Mammary epithelial cell (primary cell): ENCODE measurements at regions of chrX and their contacts with region 1.

Region 1: GRCh38 chrX:103640401-103641155 is 11.8 kb downstream of the TCEAL1 start:
- DNase-seq: peak; percentile 33
- H3K4me3 ChIP-seq: no peak overlapping the region
- H3K27ac ChIP-seq: no peak overlapping the region
- H3K4me1 ChIP-seq: peaks cover 26% of the 10 kb centered on the region
- H3K27me3 ChIP-seq: no peaks in the 10 kb centered on the region
- CTCF ChIP-seq: no peak

Region 2: DNA sequence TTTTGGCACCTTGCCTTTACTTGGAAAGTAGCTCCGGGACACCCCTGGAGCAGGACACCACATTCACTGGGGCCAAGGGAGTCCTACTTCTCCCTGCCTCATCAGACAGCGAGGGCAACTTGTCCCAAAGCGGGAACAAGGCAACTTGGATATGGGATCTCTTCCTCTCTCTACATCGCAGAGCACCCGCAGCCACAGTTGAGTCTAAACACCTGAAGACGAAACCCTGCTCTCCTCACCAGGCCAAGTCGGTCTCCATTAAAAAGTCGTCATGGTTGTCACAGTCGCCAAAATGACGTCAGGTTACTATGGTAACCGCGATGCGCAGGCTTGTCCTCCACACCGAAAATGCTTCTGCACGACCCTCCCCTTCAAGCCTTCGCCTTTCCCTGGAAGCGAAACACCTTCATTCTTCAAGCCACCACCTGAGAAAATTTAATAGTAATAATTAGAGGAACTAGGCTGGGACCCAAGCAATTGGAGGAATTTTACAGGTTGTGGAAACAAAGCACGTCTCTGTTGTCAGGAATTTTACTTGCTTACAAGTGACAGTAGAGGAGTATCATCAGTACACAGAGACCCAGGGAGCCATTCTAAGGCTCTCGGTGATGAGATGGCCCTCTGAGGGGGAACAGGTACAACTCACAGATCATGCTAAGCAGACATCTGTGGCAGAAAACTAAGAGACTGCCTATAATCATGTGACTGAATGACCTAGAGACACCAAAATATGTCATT is 85.7 kb before region 1 on chrX:
- CTCF ChIA-PET with region 1: no interaction called
- dilution Hi-C with region 1: loop called (anchors 5 kb)
- in situ Hi-C with region 1: no loop called
- intact Hi-C with region 1: no loop called
- DNase-seq: no peak
- H3K4me3 ChIP-seq: no peak overlapping the region
- H3K27ac ChIP-seq: no peak overlapping the region
- H3K4me1 ChIP-seq: peaks cover 6% of the 10 kb centered on the region
- H3K27me3 ChIP-seq: no peaks in the 10 kb centered on the region
- CTCF ChIP-seq: no peak

Region 3: GRCh38 chrX:103585411-103586313 is 54.9 kb before region 1 on chrX and contains the start of gene TCEAL4:
- CTCF ChIA-PET with region 1: no interaction called
- dilution Hi-C with region 1: loop called (anchors 5 kb)
- in situ Hi-C with region 1: no loop called
- intact Hi-C with region 1: no loop called
- DNase-seq: peak; percentile 13
- H3K4me3 ChIP-seq: peak within 1 kb of the TSS; percentile 59 to 61 (median 59)
- H3K27ac ChIP-seq: peak within 1 kb of the TSS; percentile 57
- H3K4me1 ChIP-seq: peaks cover 3% of the 10 kb centered on the region
- H3K27me3 ChIP-seq: no peaks in the 10 kb centered on the region
- CTCF ChIP-seq: no peak
- total RNA-seq, gene TCEAL4: 33.3 to 98.1 TPM